Gastrocnemius medialis (tissue), 4 donors: ENCODE measurements at regions of chr6 and their contacts with region 1.

Region 1: GRCh38 chr6:26520853-26521599 is 17.1 kb upstream of the HMGN4 start:
- DNase-seq: peak; percentile 75 to 84
- ATAC-seq: peak; percentile 83 to 86
- H3K4me3 ChIP-seq: peak overlapping the region; percentile 66 to 84 (median 76)
- H3K27ac ChIP-seq: peak overlapping the region; percentile 90 to 98 (median 98)
- H3K4me1 ChIP-seq: peaks cover 16 to 29% of the 10 kb centered on the region in 2 donors
- H3K27me3 ChIP-seq: no peaks in the 10 kb centered on the region
- CTCF ChIP-seq: no peak
- POLR2A ChIP-seq: peak in 1 of 2 donors; percentile 3

Region 2: GRCh38 chr6:26363882-26364701 is 156.9 kb before region 1 on chr6:
- in situ Hi-C with region 1: no loop called
- intact Hi-C with region 1: loop called (anchors 2 kb)
- DNase-seq: no peak
- ATAC-seq: no peak
- H3K4me3 ChIP-seq: peak overlapping the region; percentile 49 to 70 (median 69)
- H3K27ac ChIP-seq: peak overlapping the region; percentile 82 to 89 (median 86)
- H3K4me1 ChIP-seq: peaks cover 8% of the 10 kb centered on the region in 2 donors
- H3K27me3 ChIP-seq: no peaks in the 10 kb centered on the region
- CTCF ChIP-seq: no peak
- POLR2A ChIP-seq: no peak

Region 3: GRCh38 chr6:26532699-26533531 is 11.9 kb after region 1 on chr6:
- in situ Hi-C with region 1: no loop called
- intact Hi-C with region 1: loop called (anchors 1 kb)
- DNase-seq: peak; percentile 69 to 86
- ATAC-seq: peak; percentile 64 to 69
- H3K4me3 ChIP-seq: peak overlapping the region; percentile 61 to 79 (median 66)
- H3K27ac ChIP-seq: peak overlapping the region; percentile 68 to 85 (median 72)
- H3K4me1 ChIP-seq: peaks cover 32 to 36% of the 10 kb centered on the region in 2 donors
- H3K27me3 ChIP-seq: no peaks in the 10 kb centered on the region
- CTCF ChIP-seq: no peak
- POLR2A ChIP-seq: no peak

Region 4: DNA sequence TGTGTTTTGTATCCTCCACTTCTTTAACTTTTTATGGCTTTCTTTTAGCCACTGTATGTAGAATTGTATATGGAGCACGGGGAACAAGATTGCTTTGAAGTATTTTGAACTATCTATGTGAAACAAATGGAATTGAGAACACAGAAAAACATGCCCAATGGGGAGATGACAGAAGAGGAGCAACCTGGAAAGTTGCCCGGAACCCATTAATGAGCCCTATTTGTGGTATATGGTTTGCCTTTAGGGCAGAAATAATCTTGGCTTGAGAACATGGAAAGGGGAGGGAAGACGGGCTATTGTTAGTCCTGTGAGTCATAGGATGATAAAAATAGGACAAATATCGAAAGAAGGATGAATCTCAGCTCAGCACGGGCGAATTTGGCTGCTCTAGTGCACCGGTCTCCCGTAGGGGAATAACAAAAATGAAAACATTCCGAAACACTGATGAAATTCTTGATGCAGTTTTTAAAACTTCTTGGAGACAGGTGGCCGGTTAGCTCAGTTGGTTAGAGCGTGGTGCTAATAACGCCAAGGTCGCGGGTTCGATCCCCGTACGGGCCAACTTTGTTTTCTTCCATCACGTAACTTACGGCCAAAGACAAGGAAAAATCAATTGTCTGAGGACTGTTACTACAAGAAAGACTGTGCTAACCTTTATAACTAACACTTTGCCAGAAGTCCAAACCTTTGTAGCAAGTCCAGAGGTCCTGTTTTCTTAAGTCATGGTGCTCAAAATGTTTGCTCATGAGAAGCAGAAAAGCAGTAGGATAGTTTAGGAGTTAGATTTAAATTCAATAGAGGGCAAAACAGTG is 32.8 kb after region 1 on chr6:
- in situ Hi-C with region 1: no loop called
- intact Hi-C with region 1: loop called (anchors 1 kb)
- DNase-seq: peak; percentile 44 to 72
- ATAC-seq: peak; percentile 96 to 97
- H3K4me3 ChIP-seq: peak overlapping the region; percentile 52 to 63 (median 60)
- H3K27ac ChIP-seq: peak overlapping the region; percentile 75 to 85 (median 79)
- H3K4me1 ChIP-seq: peaks cover 10 to 13% of the 10 kb centered on the region in 2 donors
- H3K27me3 ChIP-seq: no peaks in the 10 kb centered on the region
- CTCF ChIP-seq: no peak
- POLR2A ChIP-seq: no peak

Region 5: DNA sequence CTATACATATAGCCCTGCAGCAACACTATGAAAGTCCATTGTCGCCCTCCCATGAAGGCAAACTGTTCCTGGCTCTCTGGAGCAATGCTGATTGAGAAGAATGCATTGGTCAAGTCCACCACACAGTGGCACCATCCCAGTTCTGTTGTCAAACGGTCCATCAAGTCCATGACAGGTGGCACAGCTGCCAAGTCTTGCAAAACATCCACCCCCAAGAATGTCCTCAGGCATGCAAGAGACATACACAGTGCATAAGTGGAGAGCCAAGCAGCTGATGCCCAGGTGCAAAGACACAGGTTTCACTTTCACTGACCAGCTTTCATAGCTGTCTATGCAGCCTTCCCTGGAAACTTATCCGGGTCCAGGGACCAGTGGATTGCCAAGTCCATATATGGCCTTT is 885.1 kb after region 1 on chr6:
- in situ Hi-C with region 1: no loop called
- intact Hi-C with region 1: no loop called
- DNase-seq: no peak
- ATAC-seq: no peak
- H3K4me3 ChIP-seq: no peak overlapping the region
- H3K27ac ChIP-seq: no peak overlapping the region
- H3K4me1 ChIP-seq: no peaks in the 10 kb centered on the region
- H3K27me3 ChIP-seq: no peaks in the 10 kb centered on the region
- CTCF ChIP-seq: no peak
- POLR2A ChIP-seq: no peak